ENCODE measurements at regions of chr10 and their contacts with region 1.

Region 1: DNA sequence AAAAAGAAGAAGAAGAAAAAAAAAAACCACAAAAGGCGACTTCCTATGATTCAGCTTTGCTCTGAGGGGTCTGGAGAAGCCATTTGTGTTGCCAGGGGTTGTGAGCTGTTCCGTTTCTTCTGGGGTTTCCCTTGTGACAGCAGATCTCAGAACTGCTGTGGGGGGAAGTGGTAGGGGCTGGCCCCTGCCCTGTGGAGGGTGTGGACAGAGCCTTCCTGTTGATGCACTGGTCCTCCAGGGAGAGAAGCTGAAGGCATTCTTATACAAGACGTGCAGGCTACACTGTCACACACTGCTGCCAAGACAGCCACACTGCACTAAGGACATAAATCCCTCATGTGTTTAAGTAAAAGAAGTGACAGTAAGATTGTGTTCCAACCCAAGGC is 17.3 kb upstream of the CSGALNACT2 start:
- DNase-seq: peak; percentile 91
- H3K4me3 Mint-ChIP-seq: no peak overlapping the region
- H3K27ac Mint-ChIP-seq: peak overlapping the region; percentile 77
- H3K4me1 Mint-ChIP-seq: peaks cover 16% of the 10 kb centered on the region
- H3K27me3 Mint-ChIP-seq: no peaks in the 10 kb centered on the region

Region 2: DNA sequence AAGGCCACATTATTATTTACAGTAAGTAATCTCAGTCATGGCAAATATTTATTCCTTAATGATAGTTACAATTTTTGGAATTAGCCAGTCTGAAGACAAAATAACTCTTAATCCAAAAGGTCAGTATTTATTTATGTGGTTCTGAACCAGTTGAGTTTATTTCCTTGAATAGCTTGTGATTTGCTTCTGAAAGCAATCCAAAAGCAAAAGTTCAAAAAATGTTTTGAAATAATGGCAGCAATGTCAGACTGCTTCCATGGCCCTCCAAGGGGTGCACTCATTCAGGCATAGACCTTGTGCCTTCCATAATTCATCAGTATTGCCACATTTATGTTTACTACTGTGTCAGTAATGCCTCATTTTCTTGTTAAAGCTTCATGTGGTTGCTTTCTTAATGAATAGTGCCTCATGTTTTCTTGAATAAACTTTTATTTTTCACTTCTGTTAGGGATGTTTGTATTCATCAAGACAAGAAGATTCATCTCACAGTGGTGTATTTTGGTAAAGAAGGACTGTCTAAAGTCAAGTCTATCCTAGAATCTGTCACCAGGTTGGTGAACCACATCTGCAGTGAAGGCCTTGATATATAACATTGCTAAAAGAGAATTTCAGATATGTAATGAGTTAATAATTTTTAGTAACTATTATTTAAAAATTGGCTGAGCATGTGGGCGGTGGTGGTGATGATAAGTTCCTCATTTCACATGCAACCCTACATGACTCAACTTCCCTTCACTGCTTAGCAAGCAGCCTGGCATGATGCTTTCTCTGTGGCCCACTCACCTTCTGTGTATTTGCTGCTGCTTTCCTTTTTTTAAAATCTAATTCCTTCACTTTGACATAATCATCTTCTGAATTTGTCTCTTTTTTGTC is 39.4 kb after region 1 on chr10:
- CTCF ChIA-PET with region 1: no interaction called
- intact Hi-C with region 1: loop called (anchors 1 kb)
- DNase-seq: peak; percentile 57
- H3K4me3 Mint-ChIP-seq: no peak overlapping the region
- H3K27ac Mint-ChIP-seq: peak overlapping the region; percentile 79
- H3K4me1 Mint-ChIP-seq: peaks cover 49% of the 10 kb centered on the region
- H3K27me3 Mint-ChIP-seq: no peaks in the 10 kb centered on the region

Region 3: GRCh38 chr10:43361986-43362839 is 241.3 kb after region 1 on chr10:
- CTCF ChIA-PET with region 1: no interaction called
- intact Hi-C with region 1: loop called (anchors 2 kb)
- DNase-seq: peak; percentile 98
- H3K4me3 Mint-ChIP-seq: peak overlapping the region; percentile 95
- H3K27ac Mint-ChIP-seq: peak overlapping the region; percentile 96
- H3K4me1 Mint-ChIP-seq: peaks cover 23% of the 10 kb centered on the region
- H3K27me3 Mint-ChIP-seq: no peaks in the 10 kb centered on the region

Measured in activated naive CD4-positive, alpha-beta T cell treated with anti-CD3 and anti-CD28 coated beads for 36 hours (primary cell).